T-cell (primary cell): ENCODE measurements at regions of chr20 and their contacts with region 1.

Region 1: GRCh38 chr20:48666747-48667146 is 161.1 kb downstream of the PREX1 start:
- DNase-seq: no peak
- ATAC-seq: no peak
- H3K4me3 ChIP-seq: no peak overlapping the region
- H3K4me3 Mint-ChIP-seq: no peak overlapping the region
- H3K27ac ChIP-seq: no peak overlapping the region
- H3K27ac Mint-ChIP-seq: peak overlapping the region in 1 of 2 donors; percentile 55
- H3K4me1 ChIP-seq: no peaks in the 10 kb centered on the region
- H3K4me1 Mint-ChIP-seq: peaks cover 0 to 5% (median 0%) of the 10 kb centered on the region in 3 donors
- H3K27me3 ChIP-seq: no peaks in the 10 kb centered on the region
- H3K27me3 Mint-ChIP-seq: no peaks in the 10 kb centered on the region

Region 2: DNA sequence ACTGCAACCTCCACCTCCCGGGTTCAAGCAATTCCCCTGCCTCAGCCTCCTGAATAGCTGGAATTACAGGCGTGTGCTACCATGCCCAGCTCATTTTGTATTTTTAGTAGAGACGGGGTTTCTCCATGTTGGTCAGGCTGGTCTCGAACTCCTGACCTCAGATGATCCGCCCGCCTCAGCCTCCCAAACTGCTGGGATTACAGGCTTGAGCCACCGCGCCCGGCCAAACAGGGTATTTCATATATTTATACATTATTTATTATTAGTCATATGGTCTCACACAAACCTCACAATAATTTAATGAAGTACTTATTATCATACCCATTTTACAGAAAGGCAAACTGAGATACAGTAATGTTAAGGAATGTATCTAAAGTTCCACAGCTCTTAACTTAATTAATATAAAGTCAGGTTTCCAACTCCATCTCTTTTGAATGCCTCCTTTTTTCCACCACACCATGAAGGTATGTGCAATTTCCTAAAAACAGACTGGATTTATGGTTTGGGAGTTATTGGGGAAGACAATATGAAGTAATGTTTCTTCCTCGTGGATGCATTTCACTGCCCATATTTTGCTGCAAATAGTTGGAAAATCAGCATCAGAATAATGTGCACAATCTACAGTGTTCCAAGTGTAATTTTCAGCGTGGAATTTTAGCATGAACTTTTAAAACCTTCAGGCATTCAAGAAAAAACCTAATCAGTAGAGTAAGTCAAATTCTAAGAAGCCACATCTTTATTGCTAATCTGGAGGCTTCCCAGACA is 1375.9 kb before region 1 on chr20:
- CTCF ChIA-PET with region 1: interaction called in 1 of 2 experiments, 13 read pairs
- POLR2A ChIA-PET with region 1: no interaction called
- DNase-seq: no peak
- ATAC-seq: no peak
- H3K4me3 ChIP-seq: no peak overlapping the region
- H3K4me3 Mint-ChIP-seq: no peak overlapping the region
- H3K27ac ChIP-seq: no peak overlapping the region
- H3K27ac Mint-ChIP-seq: no peak overlapping the region
- H3K4me1 ChIP-seq: no peaks in the 10 kb centered on the region
- H3K4me1 Mint-ChIP-seq: peaks cover 0 to 3% (median 0%) of the 10 kb centered on the region in 3 donors
- H3K27me3 ChIP-seq: no peaks in the 10 kb centered on the region
- H3K27me3 Mint-ChIP-seq: no peaks in the 10 kb centered on the region

Region 3: GRCh38 chr20:48846498-48847485 is 180.0 kb after region 1 on chr20:
- CTCF ChIA-PET with region 1: no interaction called
- POLR2A ChIA-PET with region 1: no interaction called
- DNase-seq: peak in 1 of 35 experiments; percentile 21
- ATAC-seq: no peak
- H3K4me3 ChIP-seq: no peak overlapping the region
- H3K4me3 Mint-ChIP-seq: no peak overlapping the region
- H3K27ac ChIP-seq: no peak overlapping the region
- H3K27ac Mint-ChIP-seq: no peak overlapping the region
- H3K4me1 ChIP-seq: peaks cover 0 to 9% of the 10 kb centered on the region in 2 experiments
- H3K4me1 Mint-ChIP-seq: peaks cover 0 to 16% (median 4%) of the 10 kb centered on the region in 3 donors
- H3K27me3 ChIP-seq: peaks cover 0 to 4% of the 10 kb centered on the region in 2 experiments
- H3K27me3 Mint-ChIP-seq: peaks cover 0 to 4% of the 10 kb centered on the region in 2 donors

Region 4: GRCh38 chr20:49405111-49405551 is 738.4 kb after region 1 on chr20:
- CTCF ChIA-PET with region 1: no interaction called
- POLR2A ChIA-PET with region 1: no interaction called
- DNase-seq: no peak
- ATAC-seq: no peak
- H3K4me3 ChIP-seq: no peak overlapping the region
- H3K4me3 Mint-ChIP-seq: no peak overlapping the region
- H3K27ac ChIP-seq: no peak overlapping the region
- H3K27ac Mint-ChIP-seq: no peak overlapping the region
- H3K4me1 ChIP-seq: no peaks in the 10 kb centered on the region
- H3K4me1 Mint-ChIP-seq: no peaks in the 10 kb centered on the region
- H3K27me3 ChIP-seq: peaks cover 0 to 28% of the 10 kb centered on the region in 2 experiments
- H3K27me3 Mint-ChIP-seq: peaks cover 17 to 19% of the 10 kb centered on the region in 2 donors

Region 5: GRCh38 chr20:49549811-49550551 is 883.2 kb after region 1 on chr20:
- CTCF ChIA-PET with region 1: no interaction called
- POLR2A ChIA-PET with region 1: no interaction called
- DNase-seq: no peak
- ATAC-seq: no peak
- H3K4me3 ChIP-seq: no peak overlapping the region
- H3K4me3 Mint-ChIP-seq: no peak overlapping the region
- H3K27ac ChIP-seq: no peak overlapping the region
- H3K27ac Mint-ChIP-seq: no peak overlapping the region
- H3K4me1 ChIP-seq: no peaks in the 10 kb centered on the region
- H3K4me1 Mint-ChIP-seq: no peaks in the 10 kb centered on the region
- H3K27me3 ChIP-seq: peaks cover 0 to 14% of the 10 kb centered on the region in 2 experiments
- H3K27me3 Mint-ChIP-seq: peaks cover 0 to 10% of the 10 kb centered on the region in 2 donors

Region 6: DNA sequence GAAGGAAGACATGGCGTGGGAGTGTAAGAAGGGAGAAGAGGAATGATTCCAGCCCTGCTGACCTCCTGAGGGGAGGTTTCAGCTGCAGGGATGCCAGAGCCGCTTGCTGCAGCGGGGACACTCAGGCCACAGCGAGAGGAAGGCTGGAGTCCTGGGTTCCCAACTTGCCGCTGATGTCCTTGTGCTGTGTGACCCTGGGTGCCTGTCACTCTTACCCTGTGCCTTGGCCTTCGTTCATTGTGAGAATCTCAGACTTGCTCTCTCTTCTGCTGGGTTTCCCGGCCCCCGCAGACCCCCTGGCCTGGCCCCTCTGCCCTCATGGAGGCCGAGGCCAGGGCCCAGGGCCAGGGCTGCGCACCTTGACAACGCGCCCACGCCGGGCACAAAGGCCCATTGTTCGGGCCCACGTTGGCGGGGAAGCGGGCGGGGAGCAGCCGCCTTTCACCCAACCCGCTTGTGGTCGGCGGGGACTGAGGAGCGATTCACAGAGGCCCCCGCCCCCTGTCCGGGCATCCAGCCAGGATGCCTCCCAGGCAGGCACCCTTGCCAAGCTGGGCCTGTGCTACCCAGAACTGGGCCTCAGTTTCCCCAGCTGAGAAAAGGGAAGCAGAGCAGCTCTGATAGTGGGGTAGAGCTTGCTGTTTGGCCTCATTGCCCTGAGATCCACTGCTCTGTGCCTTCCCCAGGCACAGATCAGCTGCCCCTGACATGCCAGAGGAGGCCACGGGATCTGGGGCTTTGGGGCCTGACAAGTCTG is 1576.3 kb after region 1 on chr20:
- CTCF ChIA-PET with region 1: no interaction called
- POLR2A ChIA-PET with region 1: no interaction called
- DNase-seq: no peak
- ATAC-seq: no peak
- H3K4me3 ChIP-seq: no peak overlapping the region
- H3K4me3 Mint-ChIP-seq: no peak overlapping the region
- H3K27ac ChIP-seq: no peak overlapping the region
- H3K27ac Mint-ChIP-seq: no peak overlapping the region
- H3K4me1 ChIP-seq: no peaks in the 10 kb centered on the region
- H3K4me1 Mint-ChIP-seq: no peaks in the 10 kb centered on the region
- H3K27me3 ChIP-seq: peaks cover 0 to 21% of the 10 kb centered on the region in 2 experiments
- H3K27me3 Mint-ChIP-seq: no peaks in the 10 kb centered on the region